ENCODE measurements at regions of chr7 and their contacts with region 1.

Region 1: DNA sequence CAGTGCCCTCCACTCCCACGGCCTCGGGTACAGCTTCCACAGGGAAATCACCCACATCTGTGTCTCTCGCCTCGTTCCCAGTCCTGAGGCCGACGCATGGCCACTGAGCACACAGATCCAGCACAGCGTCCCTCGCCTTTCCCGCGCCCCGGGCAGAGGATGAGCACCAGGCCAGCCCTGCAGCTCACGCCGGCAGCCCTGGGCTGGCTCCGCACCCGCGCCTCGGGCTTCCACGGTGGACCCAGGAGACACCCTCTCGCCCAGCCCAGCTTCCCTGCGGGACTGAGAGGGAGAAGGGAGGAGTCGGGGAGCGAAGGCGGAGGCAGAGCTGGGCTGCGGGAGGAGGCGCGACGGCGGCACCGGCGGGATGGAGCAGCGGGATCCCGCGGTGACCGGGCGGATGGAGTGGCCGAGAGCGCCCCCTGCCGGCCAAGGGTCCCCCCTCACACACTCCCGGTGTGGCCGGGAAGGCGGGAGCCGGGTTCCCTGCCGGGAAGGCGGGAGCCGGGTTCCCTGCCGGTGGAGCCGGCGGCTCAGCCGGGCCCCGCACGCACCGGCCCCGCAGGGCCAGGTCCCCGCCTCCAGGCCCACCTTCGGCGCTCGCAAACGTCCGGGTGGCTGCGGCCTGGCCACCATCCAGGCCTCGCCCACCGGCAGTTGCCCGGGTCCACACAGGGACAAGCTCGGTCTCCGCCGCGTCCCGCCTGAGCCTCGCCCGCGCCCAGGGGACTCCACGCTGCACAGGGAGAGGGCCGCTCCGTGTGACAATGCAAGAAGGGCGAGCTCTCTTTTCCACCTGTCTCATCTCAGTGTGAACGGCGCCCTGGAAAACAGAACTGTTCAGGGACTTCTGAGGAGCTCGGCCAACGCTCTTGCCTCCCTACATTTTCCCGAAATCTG is 110.3 kb upstream of the LANCL2 start:
- DNase-seq: peak; percentile 64 to 88
- H3K4me3 ChIP-seq: peak overlapping the region; percentile 52 to 76 (median 62)
- H3K27ac ChIP-seq: peak overlapping the region; percentile 29 to 33
- H3K4me1 ChIP-seq: peaks cover 0 to 9% of the 10 kb centered on the region in 2 donors
- H3K27me3 ChIP-seq: peaks cover 0 to 13% of the 10 kb centered on the region in 2 donors
- CTCF ChIP-seq: peak; percentile 72 to 92 (median 88)
- POLR2A ChIP-seq: no peak

Region 2: GRCh38 chr7:54788664-54789063 is 466.2 kb before region 1 on chr7:
- intact Hi-C with region 1: loop called (anchors 5 kb)
- DNase-seq: no peak
- H3K4me3 ChIP-seq: no peak overlapping the region
- H3K27ac ChIP-seq: no peak overlapping the region
- H3K4me1 ChIP-seq: peaks cover 0 to 6% of the 10 kb centered on the region in 2 donors
- H3K27me3 ChIP-seq: no peaks in the 10 kb centered on the region
- CTCF ChIP-seq: peak in 2 of 3 donors; percentile 56 to 67
- POLR2A ChIP-seq: no peak

Measured in breast epithelium (tissue), 4 donors.